ENCODE measurements at regions of chr13 and their contacts with region 1.

Region 1: GRCh38 chr13:27449936-27450828 is at the start of gene MTIF3:
- DNase-seq: peak; percentile 84 to 96 (median 94)
- H3K4me3 ChIP-seq: peak within 1 kb of the TSS; percentile 57 to 99 (median 93)
- H3K27ac ChIP-seq: peak within 1 kb of the TSS; percentile 77 to 100 (median 99)
- H3K27me3 ChIP-seq: no peaks in the 10 kb centered on the region
- CTCF ChIP-seq: peak in 20 of 56 donors; percentile 4 to 41 (median 22)
- total RNA-seq, gene MTIF3: 32.1 to 71.7 (median 50.4) TPM

Region 2: DNA sequence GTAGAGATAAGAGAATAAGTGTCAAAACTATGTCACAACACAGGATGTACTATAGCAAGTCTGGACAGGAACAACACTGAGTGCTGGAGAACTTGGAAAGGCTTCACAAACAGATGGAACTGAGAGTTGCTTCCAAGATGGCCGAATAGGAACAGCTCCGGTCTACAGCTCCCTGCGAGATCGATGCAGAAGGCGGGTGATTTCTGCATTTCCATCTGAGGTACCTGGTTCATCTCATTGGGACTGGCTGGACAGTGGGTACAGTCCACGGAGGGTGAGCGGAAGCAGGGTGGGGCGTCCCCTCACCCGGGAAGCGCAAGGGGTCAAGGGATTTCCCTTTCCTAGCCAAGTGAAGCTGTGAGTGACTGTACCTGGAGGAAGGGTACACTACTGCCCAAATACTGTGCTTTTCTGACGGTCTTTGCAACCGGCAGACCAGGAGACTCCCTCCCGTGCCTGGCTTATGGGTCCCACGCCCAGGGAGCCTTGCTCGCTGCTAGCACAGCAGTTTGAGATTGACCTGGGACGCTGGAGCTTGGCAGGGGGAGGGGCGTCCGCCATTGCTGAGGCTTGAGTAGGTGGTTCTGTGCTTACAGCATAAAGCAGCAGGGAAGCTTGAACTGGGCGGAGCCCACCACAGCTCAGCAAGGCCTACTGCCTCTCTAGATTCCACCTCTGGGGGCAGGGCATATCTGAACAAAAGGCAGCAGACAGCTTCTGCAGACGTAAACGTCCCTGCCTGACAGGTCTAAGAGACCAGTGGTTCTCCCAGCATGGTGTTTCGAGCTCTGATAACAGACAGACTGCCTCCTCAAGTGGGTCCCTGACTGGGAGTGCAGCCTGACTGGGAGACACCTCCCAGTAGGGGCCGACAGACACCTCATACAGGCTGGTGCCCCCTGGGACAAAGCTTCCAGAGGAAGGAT is 324.6 kb before region 1 on chr13:
- intact Hi-C with region 1: no loop called
- DNase-seq: peak in 3 of 10 donors; percentile 26 to 46 (median 38)
- H3K4me3 ChIP-seq: peak overlapping the region in 19 of 59 donors; percentile 0 to 44 (median 23)
- H3K27ac ChIP-seq: peak overlapping the region in 14 of 59 donors; percentile 2 to 70 (median 28)
- H3K27me3 ChIP-seq: no peaks in the 10 kb centered on the region
- CTCF ChIP-seq: no peak

Region 3: GRCh38 chr13:27524981-27525975 is 75.1 kb after region 1 on chr13:
- intact Hi-C with region 1: loop called in 1 of 2 experiments (anchors 5 kb)
- DNase-seq: peak in 1 of 10 donors; percentile 66
- H3K4me3 ChIP-seq: no peak overlapping the region
- H3K27ac ChIP-seq: peak overlapping the region in 10 of 59 donors; percentile 9 to 73 (median 28)
- H3K27me3 ChIP-seq: peaks cover 0 to 6% (median 0%) of the 10 kb centered on the region in 45 donors
- CTCF ChIP-seq: no peak

Region 4: GRCh38 chr13:27620377-27621115 is 170.4 kb after region 1 on chr13 and contains the start of gene LNX2:
- intact Hi-C with region 1: loop called (anchors 2 to 5 kb)
- DNase-seq: peak; percentile 95 to 100 (median 98)
- H3K4me3 ChIP-seq: peak within 1 kb of the TSS; percentile 74 to 99 (median 88)
- H3K27ac ChIP-seq: peak within 1 kb of the TSS; percentile 41 to 96 (median 89)
- H3K27me3 ChIP-seq: no peaks in the 10 kb centered on the region
- CTCF ChIP-seq: peak in 21 of 56 donors; percentile 0 to 53 (median 15)
- total RNA-seq, gene LNX2: 3.0 to 8.1 (median 5.5) TPM